IMR-90 (cell line): ENCODE measurements at regions of chr5 and their contacts with region 1.

Region 1: DNA sequence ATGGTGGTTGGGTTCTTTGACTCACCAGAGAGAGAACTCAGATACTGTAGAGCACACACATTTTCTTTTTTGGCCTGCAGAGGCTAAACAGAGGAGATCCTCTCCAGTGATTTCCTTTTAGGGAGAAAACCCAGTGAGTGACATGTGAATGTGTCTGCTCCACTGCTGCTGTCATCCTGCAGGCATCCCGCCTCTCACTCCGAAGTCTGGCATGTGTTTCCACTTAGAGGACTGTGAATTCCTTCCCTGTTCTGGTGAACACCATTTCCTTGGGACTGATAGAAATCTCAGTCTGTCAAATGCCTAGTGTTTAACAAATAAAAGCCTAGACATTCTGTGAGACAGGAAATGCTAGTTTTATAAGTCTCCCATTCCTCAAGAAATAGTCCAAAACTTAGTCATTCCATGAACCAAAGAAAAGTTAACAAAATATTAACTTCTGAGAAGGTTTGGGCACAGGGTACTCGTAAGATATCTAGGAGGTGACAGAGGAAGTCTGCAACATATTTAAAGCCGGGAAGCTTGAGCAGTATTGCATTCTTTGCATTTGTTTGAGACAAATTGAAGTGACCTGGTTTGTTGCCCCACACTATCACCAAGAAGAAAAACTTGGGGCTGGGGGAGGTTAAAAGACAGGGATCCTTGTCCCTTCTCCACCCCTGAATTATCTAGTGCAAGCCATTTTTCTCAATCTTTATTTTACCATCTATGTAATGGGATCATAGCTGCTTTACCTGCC is 74.9 kb upstream of the NIPAL4 start:
- DNase-seq: peak; percentile 99
- ATAC-seq: peak; percentile 86
- H3K4me3 ChIP-seq: no peak overlapping the region
- H3K27ac ChIP-seq: peak overlapping the region; percentile 64
- H3K4me1 ChIP-seq: peaks cover 23% of the 10 kb centered on the region
- H3K27me3 ChIP-seq: no peaks in the 10 kb centered on the region
- CTCF ChIP-seq: no peak
- POLR2A ChIP-seq: no peak
- RAD21 ChIP-seq: no peak

Region 2: GRCh38 chr5:157464519-157465171 is 79.5 kb after region 1 on chr5:
- CTCF ChIA-PET with region 1: no interaction called
- POLR2A ChIA-PET with region 1: no interaction called
- dilution Hi-C with region 1: no loop called
- in situ Hi-C with region 1: no loop called
- intact Hi-C with region 1: loop called (anchors 5 kb)
- DNase-seq: peak; percentile 90
- ATAC-seq: peak; percentile 79
- H3K4me3 ChIP-seq: no peak overlapping the region
- H3K27ac ChIP-seq: 0 out of 2 replicates have a peak overlapping the region, but pooled peaks have one; percentile 26
- H3K4me1 ChIP-seq: peaks cover 10% of the 10 kb centered on the region
- H3K27me3 ChIP-seq: peaks cover under 1% of the 10 kb centered on the region; the same call in 1 of the 2 replicates
- CTCF ChIP-seq: no peak
- POLR2A ChIP-seq: no peak
- RAD21 ChIP-seq: no peak